ENCODE measurements at regions of chr22 and their contacts with region 1.

Region 1: DNA sequence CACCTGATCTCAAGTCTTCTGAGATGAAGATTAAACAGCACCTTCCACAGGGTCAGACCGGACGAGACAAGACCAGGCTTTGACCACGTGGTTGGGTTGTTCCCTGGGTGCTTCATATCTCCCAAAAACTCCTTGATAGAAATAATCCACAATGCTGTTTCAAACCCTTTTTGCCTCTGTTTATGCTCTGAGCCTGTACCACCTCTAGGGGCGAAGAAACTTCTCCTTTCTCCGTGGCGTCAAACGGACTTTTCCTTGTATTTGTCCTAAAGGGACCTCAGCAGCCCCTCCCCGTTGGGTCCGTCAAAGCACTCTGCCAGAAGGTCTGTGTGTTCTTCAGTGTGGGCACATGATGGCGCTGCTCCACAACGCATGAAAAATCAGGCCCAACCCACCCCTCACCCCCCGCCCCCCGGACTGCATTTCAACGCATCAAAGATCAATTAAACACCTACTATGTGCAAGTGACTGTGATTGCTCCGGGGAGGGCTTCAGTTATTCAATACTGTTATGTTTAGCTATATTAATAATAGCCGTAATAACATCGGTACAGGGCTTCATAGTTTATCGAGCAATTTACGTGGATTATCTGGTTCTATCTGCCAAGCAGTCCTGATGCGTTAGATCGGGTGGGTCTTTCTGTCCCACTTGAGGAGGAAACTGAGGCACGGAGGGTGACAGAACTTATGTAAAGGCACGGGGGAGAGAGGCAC is 17.3 kb upstream of the EIF3D start:
- DNase-seq: peak; percentile 76
- H3K4me3 ChIP-seq: no peak overlapping the region
- H3K27ac ChIP-seq: no peak overlapping the region
- H3K4me1 ChIP-seq: no peaks in the 10 kb centered on the region
- H3K27me3 ChIP-seq: no peaks in the 10 kb centered on the region
- CTCF ChIP-seq: peak; percentile 71

Region 2: GRCh38 chr22:36387752-36388518 is 158.3 kb before region 1 on chr22 and contains the start of gene MYH9:
- CTCF ChIA-PET with region 1: no interaction called
- POLR2A ChIA-PET with region 1: no interaction called
- intact Hi-C with region 1: no loop called
- DNase-seq: peak; percentile 100
- H3K4me3 ChIP-seq: peak within 1 kb of the TSS; percentile 99
- H3K27ac ChIP-seq: peak within 1 kb of the TSS; percentile 91
- H3K4me1 ChIP-seq: peaks cover 28% of the 10 kb centered on the region
- H3K27me3 ChIP-seq: no peaks in the 10 kb centered on the region
- CTCF ChIP-seq: no peak
- total RNA-seq, gene MYH9: 290 and 323 TPM in 2 replicates

Region 3: DNA sequence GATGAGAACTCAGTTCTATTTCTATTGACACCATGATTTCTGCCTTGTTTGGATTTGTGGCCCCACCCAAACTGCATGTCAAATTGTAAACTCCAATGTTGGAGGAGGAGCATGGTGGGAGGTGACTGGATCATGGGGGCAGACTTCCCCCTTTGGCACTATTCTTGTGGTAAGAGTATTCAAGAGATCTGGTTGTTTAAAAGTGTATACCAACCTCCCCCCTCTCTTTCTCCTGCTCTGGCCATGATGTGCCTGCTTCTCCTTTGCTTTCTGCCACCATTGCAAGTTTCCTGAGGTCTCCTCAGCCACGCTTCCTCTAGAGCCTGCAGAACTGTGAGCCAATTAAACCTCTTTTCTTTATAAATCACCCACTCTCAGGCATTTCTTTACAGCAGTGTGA is 31.5 kb before region 1 on chr22:
- CTCF ChIA-PET with region 1: no interaction called
- POLR2A ChIA-PET with region 1: no interaction called
- intact Hi-C with region 1: no loop called
- DNase-seq: no peak
- H3K4me3 ChIP-seq: no peak overlapping the region
- H3K27ac ChIP-seq: no peak overlapping the region
- H3K4me1 ChIP-seq: no peaks in the 10 kb centered on the region
- H3K27me3 ChIP-seq: no peaks in the 10 kb centered on the region
- CTCF ChIP-seq: no peak

Region 4: GRCh38 chr22:36528795-36529751 is 17.2 kb before region 1 on chr22 and contains the start of gene EIF3D:
- CTCF ChIA-PET with region 1: no interaction called
- POLR2A ChIA-PET with region 1: interaction called, 11 read pairs
- intact Hi-C with region 1: no loop called
- DNase-seq: peak; percentile 100
- H3K4me3 ChIP-seq: peak within 1 kb of the TSS; percentile 70
- H3K27ac ChIP-seq: peak within 1 kb of the TSS; percentile 90
- H3K4me1 ChIP-seq: peaks cover 13% of the 10 kb centered on the region
- H3K27me3 ChIP-seq: no peaks in the 10 kb centered on the region
- CTCF ChIP-seq: no peak
- total RNA-seq, gene EIF3D: 237 and 249 TPM in 2 replicates

Region 5: DNA sequence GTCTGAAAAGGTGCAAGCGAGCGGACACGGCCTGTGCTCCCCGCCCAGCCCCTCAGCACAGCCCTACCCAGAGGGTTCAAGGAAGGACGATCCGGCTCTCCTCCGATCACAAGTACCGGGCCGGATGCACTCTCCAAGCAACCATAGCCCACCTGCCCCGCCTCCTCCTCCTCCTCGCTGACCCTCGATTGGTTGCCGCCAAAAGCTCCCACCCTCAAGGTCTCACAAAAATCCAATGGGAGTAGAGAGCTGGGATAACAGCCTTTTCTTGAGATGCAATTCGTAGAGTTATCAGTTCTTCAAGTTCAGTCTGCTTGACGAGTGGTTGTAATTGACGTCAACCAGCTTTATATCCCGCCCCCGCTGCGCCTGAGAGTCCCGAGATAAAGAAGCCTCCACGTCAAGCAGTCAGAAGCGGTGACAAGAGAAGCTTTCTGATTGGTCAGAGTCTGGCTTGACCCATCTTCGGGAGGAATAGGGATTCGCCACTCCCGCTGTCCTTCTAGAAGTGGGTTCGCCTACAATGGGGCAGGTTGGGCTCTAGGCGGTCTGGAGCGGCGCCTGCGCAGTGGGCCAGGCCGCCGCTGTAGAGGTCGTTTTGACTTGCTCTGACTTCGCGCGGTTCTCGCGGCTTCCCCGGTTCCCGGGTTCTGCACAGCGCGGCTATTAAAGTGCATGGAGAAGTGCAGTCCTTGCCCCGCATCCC is 229.9 kb after region 1 on chr22 and contains the start of gene IFT27:
- CTCF ChIA-PET with region 1: interaction called, 5 read pairs
- POLR2A ChIA-PET with region 1: no interaction called
- intact Hi-C with region 1: loop called (anchors 1 kb)
- DNase-seq: peak; percentile 100
- H3K4me3 ChIP-seq: peak within 1 kb of the TSS; percentile 62
- H3K27ac ChIP-seq: peak within 1 kb of the TSS; percentile 24
- H3K4me1 ChIP-seq: peaks cover 6% of the 10 kb centered on the region
- H3K27me3 ChIP-seq: no peaks in the 10 kb centered on the region
- CTCF ChIP-seq: no peak
- total RNA-seq, gene IFT27: 24.9 and 30.9 TPM in 2 replicates

Region 6: GRCh38 chr22:36856121-36856791 is 310.0 kb after region 1 on chr22:
- CTCF ChIA-PET with region 1: interaction called, 7 read pairs
- POLR2A ChIA-PET with region 1: no interaction called
- intact Hi-C with region 1: loop called (anchors 1 kb)
- DNase-seq: peak; percentile 88
- H3K4me3 ChIP-seq: no peak overlapping the region
- H3K27ac ChIP-seq: no peak overlapping the region
- H3K4me1 ChIP-seq: no peaks in the 10 kb centered on the region
- H3K27me3 ChIP-seq: peaks cover 12% of the 10 kb centered on the region
- CTCF ChIP-seq: peak; percentile 100

Region 7: DNA sequence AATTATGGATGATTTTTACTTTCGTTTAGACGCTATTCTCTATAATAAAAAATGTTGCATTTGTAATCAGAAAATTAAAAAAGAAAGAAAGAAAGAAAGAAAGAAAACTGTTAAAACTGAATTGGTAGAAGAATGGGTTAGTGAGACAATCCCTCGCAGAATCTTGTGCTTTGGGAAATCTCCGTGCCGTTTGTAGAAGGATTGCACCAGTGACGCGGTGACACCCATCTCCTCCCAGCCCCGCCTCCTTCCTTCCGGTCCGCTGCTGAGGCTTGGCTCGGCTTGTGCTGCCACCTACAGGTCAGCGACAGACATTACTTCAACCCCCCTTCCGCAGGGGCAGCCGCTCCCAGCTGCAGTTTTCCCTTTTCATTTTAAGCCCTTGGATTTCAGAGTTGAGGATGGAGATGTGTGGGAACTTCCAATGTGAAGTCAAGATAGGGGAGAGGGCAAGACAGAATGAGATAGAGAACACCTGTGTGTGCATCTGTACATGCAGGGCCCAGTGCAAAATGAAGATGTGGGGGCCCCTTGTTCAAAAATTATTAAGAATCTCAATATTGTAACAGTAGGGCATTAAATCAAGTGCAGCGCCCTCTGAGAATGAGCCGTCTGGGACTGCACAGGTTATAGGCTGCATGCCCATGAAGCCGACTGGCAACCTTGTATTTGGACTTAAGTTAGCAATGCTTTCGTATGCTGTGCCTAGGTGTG is 431.9 kb after region 1 on chr22:
- CTCF ChIA-PET with region 1: no interaction called
- POLR2A ChIA-PET with region 1: no interaction called
- intact Hi-C with region 1: loop called (anchors 2 kb)
- DNase-seq: peak; percentile 93
- H3K4me3 ChIP-seq: peak overlapping the region; percentile 44
- H3K27ac ChIP-seq: no peak overlapping the region
- H3K4me1 ChIP-seq: no peaks in the 10 kb centered on the region
- H3K27me3 ChIP-seq: no peaks in the 10 kb centered on the region
- CTCF ChIP-seq: peak; percentile 90

Region 8: GRCh38 chr22:37267135-37267587 is 720.9 kb after region 1 on chr22:
- CTCF ChIA-PET with region 1: no interaction called
- POLR2A ChIA-PET with region 1: no interaction called
- intact Hi-C with region 1: loop called (anchors 10 kb)
- DNase-seq: peak; percentile 60
- H3K4me3 ChIP-seq: peak overlapping the region; percentile 43
- H3K27ac ChIP-seq: no peak overlapping the region
- H3K4me1 ChIP-seq: no peaks in the 10 kb centered on the region
- H3K27me3 ChIP-seq: peaks cover 12% of the 10 kb centered on the region
- CTCF ChIP-seq: peak; percentile 87

Measured in A673 (cell line).